ENCODE measurements at regions of chr11 and their contacts with region 1.

Region 1: DNA sequence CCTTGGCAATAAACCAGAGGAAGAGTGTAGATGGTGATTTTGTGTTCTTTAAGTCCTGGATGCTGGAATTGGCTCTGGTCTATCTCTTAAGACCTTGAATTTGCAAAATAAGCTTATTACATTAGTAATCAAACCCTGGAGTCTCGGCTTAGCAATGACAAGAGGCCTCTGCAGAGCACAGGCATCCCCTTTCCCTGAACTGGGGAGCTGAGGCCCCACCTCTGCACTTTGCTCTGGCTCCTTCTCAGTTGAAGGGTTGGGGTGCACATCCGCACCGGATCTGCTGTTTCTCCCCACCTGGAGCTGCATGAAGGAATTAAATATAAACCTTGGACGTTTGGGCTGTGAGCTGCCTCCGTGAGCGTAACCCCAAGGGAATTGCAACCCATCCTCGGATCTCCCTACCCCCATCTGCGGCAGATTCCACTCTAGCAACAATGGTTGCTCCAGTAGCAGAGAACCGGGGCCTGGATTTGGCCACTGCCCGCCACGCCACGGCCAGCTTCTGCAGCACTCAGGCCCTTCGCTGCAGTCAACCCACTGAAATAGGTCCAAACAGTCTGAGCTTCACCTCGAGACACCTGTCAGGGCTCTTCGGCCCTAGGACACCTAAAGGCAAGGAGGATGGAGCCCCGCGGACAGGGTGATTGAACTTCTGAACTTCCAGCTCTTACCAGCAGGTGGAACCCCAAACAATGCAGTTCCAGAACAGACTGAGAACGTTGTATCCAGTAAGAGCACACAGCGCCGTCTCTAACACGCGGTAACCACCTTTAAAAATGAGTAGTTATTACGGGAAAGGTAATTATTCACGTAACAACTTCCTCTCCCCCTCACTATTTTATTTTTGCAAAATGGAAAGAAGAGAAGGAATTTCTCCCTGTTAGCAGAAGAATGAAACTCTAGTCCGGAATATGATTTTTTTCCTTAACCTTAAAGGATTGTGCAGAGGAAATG is 54.8 kb upstream of the CAPRIN1 start:
- DNase-seq: peak; percentile 86
- ATAC-seq: peak; percentile 99
- H3K4me3 ChIP-seq: peak overlapping the region; percentile 56
- H3K27ac ChIP-seq: no peak overlapping the region
- H3K4me1 ChIP-seq: peaks cover 8% of the 10 kb centered on the region
- H3K27me3 ChIP-seq: no peaks in the 10 kb centered on the region
- CTCF ChIP-seq: peak; percentile 81

Region 2: GRCh38 chr11:34044664-34045485 is 48.1 kb after region 1 on chr11:
- CTCF ChIA-PET with region 1: no interaction called
- POLR2A ChIA-PET with region 1: no interaction called
- intact Hi-C with region 1: loop called (anchors 2 kb)
- DNase-seq: peak; percentile 93
- ATAC-seq: peak; percentile 99
- H3K4me3 ChIP-seq: peak overlapping the region; percentile 30; the same call in 1 of the 2 replicates
- H3K27ac ChIP-seq: peak overlapping the region; percentile 98
- H3K4me1 ChIP-seq: peaks cover 14% of the 10 kb centered on the region
- H3K27me3 ChIP-seq: no peaks in the 10 kb centered on the region
- CTCF ChIP-seq: no peak

Region 3: GRCh38 chr11:34075178-34075820 is 78.5 kb after region 1 on chr11:
- CTCF ChIA-PET with region 1: no interaction called
- POLR2A ChIA-PET with region 1: no interaction called
- intact Hi-C with region 1: loop called (anchors 2 kb)
- DNase-seq: peak; percentile 78
- ATAC-seq: peak; percentile 90
- H3K4me3 ChIP-seq: peak overlapping the region; percentile 46
- H3K27ac ChIP-seq: peak overlapping the region; percentile 81
- H3K4me1 ChIP-seq: peaks cover 29% of the 10 kb centered on the region
- H3K27me3 ChIP-seq: no peaks in the 10 kb centered on the region
- CTCF ChIP-seq: no peak

Region 4: DNA sequence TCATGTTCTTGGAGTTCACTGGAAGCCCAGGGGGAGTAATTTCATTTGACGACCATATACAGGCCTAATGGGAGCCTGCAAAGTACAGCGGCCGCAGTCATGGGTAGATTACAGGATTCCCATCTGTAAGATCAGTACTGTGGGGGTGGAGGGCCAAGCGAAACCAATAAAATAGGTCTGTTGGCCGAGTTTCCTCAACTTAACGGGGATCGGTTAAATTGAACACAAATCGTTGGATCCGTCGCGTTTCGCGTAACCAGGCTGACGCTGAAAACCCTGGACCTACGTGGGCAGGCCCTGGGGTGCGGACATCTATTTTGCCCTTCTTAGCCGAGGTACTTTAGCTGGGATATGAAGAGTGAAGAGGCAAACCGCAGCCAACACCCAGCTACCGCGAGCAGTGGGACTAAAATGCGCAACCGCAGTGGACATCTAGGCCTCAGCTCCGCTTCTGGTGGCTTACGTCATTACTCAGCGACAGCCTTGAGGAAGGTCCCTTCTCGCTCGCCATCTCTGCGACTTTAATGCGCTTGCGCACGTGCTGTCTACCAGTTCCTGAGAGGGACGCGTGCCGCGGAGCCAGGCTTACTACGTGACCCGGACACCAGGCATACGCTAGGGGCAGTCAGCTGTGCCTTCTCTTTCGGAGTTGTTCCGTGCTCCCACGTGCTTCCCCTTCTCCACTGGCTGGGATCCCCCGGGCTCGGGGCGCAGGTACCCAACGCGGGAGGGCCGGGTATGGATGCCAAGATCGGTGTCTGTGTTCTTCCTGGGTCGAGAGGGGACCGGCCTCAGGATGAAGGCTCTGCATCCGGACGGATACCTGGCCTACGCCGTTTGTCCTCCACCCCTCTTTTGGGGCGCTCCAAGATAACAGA is 108.5 kb after region 1 on chr11 and contains the start of gene NAT10:
- CTCF ChIA-PET with region 1: no interaction called
- POLR2A ChIA-PET with region 1: no interaction called
- intact Hi-C with region 1: loop called (anchors 1 kb)
- DNase-seq: peak; percentile 98
- ATAC-seq: peak; percentile 87
- H3K4me3 ChIP-seq: peak within 1 kb of the TSS; percentile 85
- H3K27ac ChIP-seq: peak within 1 kb of the TSS; percentile 88
- H3K4me1 ChIP-seq: peaks cover 19% of the 10 kb centered on the region
- H3K27me3 ChIP-seq: no peaks in the 10 kb centered on the region
- CTCF ChIP-seq: no peak
- total RNA-seq, gene NAT10: 48.7 and 55.9 TPM in 2 replicates